ENCODE measurements at regions of chr6 and their contacts with region 1.

Region 1: GRCh38 chr6:45377554-45378333 is at the start of gene SUPT3H:
- DNase-seq: peak; percentile 97
- ATAC-seq: peak; percentile 89
- H3K4me3 Mint-ChIP-seq: peak within 1 kb of the TSS; percentile 99
- H3K27ac Mint-ChIP-seq: peak within 1 kb of the TSS; percentile 100
- H3K4me1 Mint-ChIP-seq: peaks cover 22% of the 10 kb centered on the region
- H3K27me3 Mint-ChIP-seq: no peaks in the 10 kb centered on the region
- total RNA-seq, gene SUPT3H: 15.5 TPM

Region 2: DNA sequence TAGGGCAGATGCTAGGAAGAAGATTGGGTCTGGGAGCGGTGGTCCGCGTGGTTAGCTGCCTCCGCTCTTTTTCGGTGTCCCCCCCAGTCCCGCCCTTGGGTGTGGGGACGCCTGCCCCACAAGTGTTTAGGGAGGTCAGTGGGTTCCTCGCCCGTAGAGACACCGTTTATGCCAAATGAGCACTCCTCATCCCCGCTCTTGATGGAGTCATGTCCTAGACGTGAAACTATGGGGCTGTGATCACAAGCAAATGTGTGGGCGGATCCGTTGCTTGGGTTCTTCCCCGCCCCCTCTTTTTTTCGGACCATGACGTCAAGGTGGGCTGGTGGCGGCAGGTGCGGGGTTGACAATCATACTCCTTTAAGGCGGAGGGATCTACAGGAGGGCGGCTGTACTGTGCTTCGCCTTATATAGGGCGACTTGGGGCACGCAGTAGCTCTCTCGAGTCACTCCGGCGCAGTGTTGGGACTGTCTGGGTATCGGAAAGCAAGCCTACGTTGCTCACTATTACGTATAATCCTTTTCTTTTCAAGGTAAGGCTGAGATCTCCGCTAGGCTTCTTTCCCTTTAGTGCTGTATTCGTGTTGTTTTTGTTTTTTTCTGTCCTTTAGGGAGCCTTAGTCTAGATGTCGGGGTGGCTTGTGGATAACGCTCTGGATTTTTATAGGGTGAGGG is 1130.9 kb before region 1 on chr6 and contains the start of gene HSP90AB1:
- CTCF ChIA-PET with region 1: no interaction called
- POLR2A ChIA-PET with region 1: no interaction called
- intact Hi-C with region 1: loop called in 1 of 2 experiments (anchors 10 kb)
- DNase-seq: peak; percentile 98
- ATAC-seq: peak; percentile 86
- H3K4me3 Mint-ChIP-seq: peak within 1 kb of the TSS; percentile 97
- H3K27ac Mint-ChIP-seq: peak within 1 kb of the TSS; percentile 99
- H3K4me1 Mint-ChIP-seq: peaks cover 44% of the 10 kb centered on the region
- H3K27me3 Mint-ChIP-seq: no peaks in the 10 kb centered on the region
- total RNA-seq, gene HSP90AB1: 2,120 to 2,263 TPM

Region 3: DNA sequence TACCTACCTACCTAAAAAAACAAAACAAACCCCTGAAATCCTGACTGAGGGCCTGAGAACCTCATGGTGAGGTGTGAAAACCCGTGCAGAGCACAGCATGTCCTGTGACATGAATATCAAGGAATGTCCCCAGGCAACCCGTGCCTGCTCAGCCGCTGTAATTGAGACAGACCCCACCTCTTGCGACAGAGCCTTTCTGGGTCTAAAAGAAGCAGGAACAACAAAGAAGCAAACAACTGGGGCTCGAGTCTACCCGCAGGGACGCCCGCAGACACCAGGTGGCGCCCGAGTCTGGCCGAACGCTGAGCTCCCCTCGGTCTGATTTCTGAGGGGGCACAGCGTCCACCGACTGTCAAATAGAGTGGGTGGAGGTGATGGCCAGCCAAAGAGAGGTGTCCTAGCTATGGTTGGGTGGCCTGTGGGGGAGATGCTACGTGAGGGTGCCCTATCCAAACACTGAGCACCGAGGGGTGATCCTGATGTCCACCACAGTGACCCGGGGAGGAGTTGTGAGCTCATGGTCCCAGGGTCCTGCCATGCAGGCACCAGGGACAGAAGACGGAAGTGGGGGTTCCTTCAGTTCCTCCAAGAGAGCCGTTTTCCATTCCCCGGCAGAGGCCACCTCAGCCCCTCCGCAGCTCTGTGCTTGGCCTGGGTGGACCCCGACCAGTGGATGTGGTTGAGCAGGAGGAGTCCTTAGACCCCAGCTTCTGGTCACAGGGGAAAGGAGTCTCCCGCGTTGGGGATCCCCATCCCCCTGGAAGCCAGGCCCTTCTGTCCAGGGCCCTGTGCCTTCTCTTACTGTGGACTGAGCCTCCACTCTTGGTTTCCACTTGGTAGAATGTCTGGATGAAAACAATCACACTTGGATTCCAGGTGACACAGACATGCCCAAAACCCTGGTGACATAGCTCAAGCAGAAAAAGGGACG is 722.1 kb before region 1 on chr6:
- CTCF ChIA-PET with region 1: no interaction called
- POLR2A ChIA-PET with region 1: no interaction called
- intact Hi-C with region 1: loop called in 1 of 2 experiments (anchors 5 kb)
- DNase-seq: peak; percentile 85
- ATAC-seq: peak; percentile 77
- H3K4me3 Mint-ChIP-seq: no peak overlapping the region
- H3K27ac Mint-ChIP-seq: peak overlapping the region; percentile 75
- H3K4me1 Mint-ChIP-seq: peaks cover 13% of the 10 kb centered on the region
- H3K27me3 Mint-ChIP-seq: peaks cover 4% of the 10 kb centered on the region

Region 4: GRCh38 chr6:45009576-45009975 is 368.2 kb before region 1 on chr6:
- CTCF ChIA-PET with region 1: no interaction called
- POLR2A ChIA-PET with region 1: no interaction called
- intact Hi-C with region 1: loop called in 1 of 2 experiments (anchors 5 kb)
- DNase-seq: no peak
- ATAC-seq: peak; percentile 98
- H3K4me3 Mint-ChIP-seq: no peak overlapping the region
- H3K27ac Mint-ChIP-seq: peak overlapping the region; percentile 10
- H3K4me1 Mint-ChIP-seq: peaks cover 16% of the 10 kb centered on the region
- H3K27me3 Mint-ChIP-seq: no peaks in the 10 kb centered on the region

Region 5: GRCh38 chr6:45479834-45480751 is 102.3 kb after region 1 on chr6:
- CTCF ChIA-PET with region 1: no interaction called
- POLR2A ChIA-PET with region 1: no interaction called
- intact Hi-C with region 1: loop called in 1 of 2 experiments (anchors 5 kb)
- DNase-seq: peak; percentile 18
- ATAC-seq: peak; percentile 47
- H3K4me3 Mint-ChIP-seq: no peak overlapping the region
- H3K27ac Mint-ChIP-seq: peak overlapping the region; percentile 44
- H3K4me1 Mint-ChIP-seq: peaks cover 34% of the 10 kb centered on the region
- H3K27me3 Mint-ChIP-seq: no peaks in the 10 kb centered on the region

Region 6: GRCh38 chr6:45801471-45802289 is 423.9 kb after region 1 on chr6:
- CTCF ChIA-PET with region 1: no interaction called
- POLR2A ChIA-PET with region 1: interaction called, 3 read pairs
- intact Hi-C with region 1: loop called in 1 of 2 experiments (anchors 1 kb)
- DNase-seq: peak; percentile 80
- ATAC-seq: peak; percentile 82
- H3K4me3 Mint-ChIP-seq: no peak overlapping the region
- H3K27ac Mint-ChIP-seq: peak overlapping the region; percentile 72
- H3K4me1 Mint-ChIP-seq: peaks cover 22% of the 10 kb centered on the region
- H3K27me3 Mint-ChIP-seq: peaks cover 2% of the 10 kb centered on the region